IMR-90 (cell line): ENCODE measurements at regions of chr1 and their contacts with region 1.

Region 1: GRCh38 chr1:145957443-145958319 is at the start of gene LIX1L:
- DNase-seq: peak; percentile 96
- ATAC-seq: peak; percentile 85
- H3K4me3 ChIP-seq: peak within 1 kb of the TSS; percentile 68
- H3K27ac ChIP-seq: peak within 1 kb of the TSS; percentile 94
- H3K4me1 ChIP-seq: peaks cover 18% of the 10 kb centered on the region
- H3K27me3 ChIP-seq: no peaks in the 10 kb centered on the region
- CTCF ChIP-seq: no peak
- POLR2A ChIP-seq: peak; percentile 86
- RAD21 ChIP-seq: no peak
- total RNA-seq, gene LIX1L: 14.7 and 18.3 TPM in 2 replicates

Region 2: DNA sequence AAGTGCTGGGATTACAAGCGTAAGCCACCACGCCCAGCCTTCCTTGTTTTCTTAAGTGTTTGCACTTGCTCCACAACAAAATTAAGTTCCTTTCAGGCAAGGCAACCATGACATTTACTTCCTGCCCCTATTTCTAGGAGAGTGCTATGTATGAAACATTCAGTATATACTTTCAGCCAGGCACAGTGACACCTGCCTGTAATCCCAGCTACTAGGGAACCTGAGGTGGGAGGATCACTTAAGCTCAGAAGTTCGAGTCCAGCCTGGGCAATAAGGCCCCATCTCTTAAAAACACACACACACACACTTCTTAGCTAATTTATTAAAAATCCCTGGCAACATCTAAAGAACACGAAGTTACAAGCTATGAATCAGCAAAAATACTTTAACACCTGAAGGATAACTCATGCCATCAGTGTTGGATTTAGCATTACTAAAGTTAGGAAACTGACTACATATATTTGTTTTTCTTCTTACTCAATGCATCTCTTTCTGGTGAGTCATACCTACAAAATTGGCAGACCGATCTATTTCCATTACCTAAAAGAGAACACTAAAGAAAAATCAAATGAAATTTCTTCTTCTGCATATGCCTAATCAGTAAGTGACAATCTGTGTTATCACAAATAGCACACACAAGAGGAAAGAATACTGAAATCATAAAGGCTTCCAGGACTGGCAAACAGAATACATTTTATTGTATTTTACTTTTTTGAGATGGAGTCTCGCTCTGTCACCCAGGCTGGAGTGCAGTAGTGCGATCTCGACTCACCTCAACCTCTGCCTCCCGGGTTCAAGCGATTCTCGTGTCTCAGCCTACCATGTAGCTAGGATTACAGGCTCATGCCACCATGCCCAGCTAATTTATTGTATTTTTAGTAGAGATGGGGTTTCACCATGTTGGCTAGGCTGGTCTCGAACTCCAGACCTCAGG is 175.2 kb before region 1 on chr1:
- CTCF ChIA-PET with region 1: no interaction called
- POLR2A ChIA-PET with region 1: no interaction called
- dilution Hi-C with region 1: no loop called
- in situ Hi-C with region 1: no loop called
- intact Hi-C with region 1: no loop called
- DNase-seq: peak; percentile 96
- ATAC-seq: peak; percentile 74
- H3K4me3 ChIP-seq: no peak overlapping the region
- H3K27ac ChIP-seq: peak overlapping the region; percentile 73
- H3K4me1 ChIP-seq: peaks cover 12% of the 10 kb centered on the region; the same call in 1 of the 2 replicates
- H3K27me3 ChIP-seq: no peaks in the 10 kb centered on the region
- CTCF ChIP-seq: no peak
- POLR2A ChIP-seq: no peak
- RAD21 ChIP-seq: no peak

Region 3: DNA sequence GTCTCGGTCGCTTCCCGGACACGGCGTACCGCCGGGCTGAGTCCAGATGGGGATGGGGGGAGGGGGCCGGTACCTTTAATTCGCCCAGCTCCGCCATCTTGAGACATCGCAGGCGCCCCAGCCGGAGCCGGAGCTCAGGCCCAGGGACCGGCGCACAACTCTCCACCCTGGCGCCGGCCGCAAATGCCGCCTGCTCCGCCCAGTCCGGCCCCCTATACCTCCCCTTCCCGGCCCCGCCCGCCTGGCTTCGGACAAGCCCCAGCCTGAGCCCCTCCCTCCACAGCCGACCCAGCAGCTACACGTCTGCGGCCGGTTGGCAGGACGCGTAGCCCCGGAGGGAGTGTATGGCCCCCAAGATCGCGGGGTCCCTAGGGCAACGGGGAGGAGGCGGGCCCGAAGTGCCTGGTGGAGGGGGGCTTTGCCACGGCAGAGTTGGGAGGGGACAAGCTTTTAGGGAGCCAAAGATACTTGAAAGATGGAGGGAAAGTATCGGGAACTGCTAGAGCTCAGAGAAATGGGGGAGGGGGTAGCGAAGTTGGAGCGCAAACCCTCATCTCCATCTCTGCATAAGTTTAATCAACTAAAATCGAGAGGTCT is 98.7 kb before region 1 on chr1 and contains the start of gene PIAS3:
- CTCF ChIA-PET with region 1: interaction called, 3 read pairs
- POLR2A ChIA-PET with region 1: interaction called, 14 read pairs
- dilution Hi-C with region 1: no loop called
- in situ Hi-C with region 1: no loop called
- intact Hi-C with region 1: loop called (anchors 5 kb)
- DNase-seq: peak; percentile 93
- ATAC-seq: peak; percentile 94
- H3K4me3 ChIP-seq: peak within 1 kb of the TSS; percentile 84
- H3K27ac ChIP-seq: peak within 1 kb of the TSS; percentile 96
- H3K4me1 ChIP-seq: peaks cover 3% of the 10 kb centered on the region
- H3K27me3 ChIP-seq: no peaks in the 10 kb centered on the region
- CTCF ChIP-seq: no peak
- POLR2A ChIP-seq: no peak
- RAD21 ChIP-seq: no peak
- total RNA-seq, gene PIAS3: 10.8 and 11.1 TPM in 2 replicates

Region 4: GRCh38 chr1:145927063-145927886 is 30.4 kb before region 1 on chr1 and contains the start of gene RBM8A:
- CTCF ChIA-PET with region 1: interaction called, 3 read pairs
- POLR2A ChIA-PET with region 1: interaction called, 3 read pairs
- dilution Hi-C with region 1: no loop called
- in situ Hi-C with region 1: no loop called
- intact Hi-C with region 1: loop called (anchors 2 kb)
- DNase-seq: peak; percentile 99
- ATAC-seq: peak; percentile 100
- H3K4me3 ChIP-seq: peak within 1 kb of the TSS; percentile 76
- H3K27ac ChIP-seq: peak within 1 kb of the TSS; percentile 87
- H3K4me1 ChIP-seq: peaks cover 3% of the 10 kb centered on the region
- H3K27me3 ChIP-seq: no peaks in the 10 kb centered on the region
- CTCF ChIP-seq: peak; percentile 62
- POLR2A ChIP-seq: peak; percentile 97
- RAD21 ChIP-seq: no peak
- total RNA-seq, gene RBM8A: 94.1 and 228 TPM in 2 replicates